A673 (cell line): ENCODE measurements at regions of chr18 and their contacts with region 1.

Region 1: GRCh38 chr18:35143622-35144596 is 96.9 kb upstream of the ZNF397 start:
- DNase-seq: peak; percentile 51
- H3K4me3 ChIP-seq: no peak overlapping the region
- H3K27ac ChIP-seq: no peak overlapping the region
- H3K4me1 ChIP-seq: no peaks in the 10 kb centered on the region
- H3K27me3 ChIP-seq: no peaks in the 10 kb centered on the region
- CTCF ChIP-seq: peak; percentile 75

Region 2: GRCh38 chr18:34844732-34845459 is 299.0 kb before region 1 on chr18:
- CTCF ChIA-PET with region 1: no interaction called
- POLR2A ChIA-PET with region 1: no interaction called
- intact Hi-C with region 1: no loop called
- DNase-seq: no peak
- H3K4me3 ChIP-seq: no peak overlapping the region
- H3K27ac ChIP-seq: no peak overlapping the region
- H3K4me1 ChIP-seq: peaks cover 5% of the 10 kb centered on the region
- H3K27me3 ChIP-seq: no peaks in the 10 kb centered on the region
- CTCF ChIP-seq: no peak

Region 3: GRCh38 chr18:34871435-34871834 is 272.5 kb before region 1 on chr18:
- CTCF ChIA-PET with region 1: interaction called, 3 read pairs
- POLR2A ChIA-PET with region 1: no interaction called
- intact Hi-C with region 1: loop called (anchors 10 kb)
- DNase-seq: peak; percentile 4
- H3K4me3 ChIP-seq: no peak overlapping the region
- H3K27ac ChIP-seq: no peak overlapping the region
- H3K4me1 ChIP-seq: no peaks in the 10 kb centered on the region
- H3K27me3 ChIP-seq: no peaks in the 10 kb centered on the region
- CTCF ChIP-seq: no peak

Region 4: DNA sequence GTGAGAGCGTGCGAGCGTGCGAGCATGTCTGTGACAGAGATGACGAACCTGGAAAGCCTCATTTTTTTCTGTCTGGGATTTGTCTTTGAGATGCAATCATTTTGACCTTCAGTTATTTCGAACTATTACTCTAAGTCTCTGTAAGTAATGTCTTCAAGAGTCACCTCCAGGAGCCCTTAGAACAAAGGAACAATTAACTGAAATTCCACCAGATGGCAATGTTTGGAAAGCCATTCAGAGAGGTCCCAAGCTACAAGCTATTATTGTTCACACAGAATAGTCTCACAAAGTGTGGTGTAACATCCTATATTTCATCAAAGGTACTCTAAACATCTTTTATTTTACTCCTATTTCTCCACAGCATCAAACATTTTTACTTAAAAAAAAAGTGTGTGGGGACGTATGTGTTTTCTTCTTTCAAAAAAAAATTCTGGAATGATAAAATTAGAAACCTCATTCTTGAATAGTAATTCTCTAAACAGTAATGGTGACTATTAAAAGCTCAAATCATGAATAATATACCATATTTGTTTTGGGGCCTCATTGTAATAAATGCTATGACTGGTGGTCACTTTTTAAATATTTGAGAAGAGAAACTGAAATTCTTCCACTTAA is 137.8 kb before region 1 on chr18:
- CTCF ChIA-PET with region 1: interaction called, 18 read pairs
- POLR2A ChIA-PET with region 1: no interaction called
- intact Hi-C with region 1: loop called (anchors 2 kb)
- DNase-seq: peak; percentile 64
- H3K4me3 ChIP-seq: no peak overlapping the region
- H3K27ac ChIP-seq: no peak overlapping the region
- H3K4me1 ChIP-seq: no peaks in the 10 kb centered on the region
- H3K27me3 ChIP-seq: peaks cover 6% of the 10 kb centered on the region
- CTCF ChIP-seq: peak; percentile 64